ENCODE measurements at regions of chr20 and their contacts with region 1.

Region 1: DNA sequence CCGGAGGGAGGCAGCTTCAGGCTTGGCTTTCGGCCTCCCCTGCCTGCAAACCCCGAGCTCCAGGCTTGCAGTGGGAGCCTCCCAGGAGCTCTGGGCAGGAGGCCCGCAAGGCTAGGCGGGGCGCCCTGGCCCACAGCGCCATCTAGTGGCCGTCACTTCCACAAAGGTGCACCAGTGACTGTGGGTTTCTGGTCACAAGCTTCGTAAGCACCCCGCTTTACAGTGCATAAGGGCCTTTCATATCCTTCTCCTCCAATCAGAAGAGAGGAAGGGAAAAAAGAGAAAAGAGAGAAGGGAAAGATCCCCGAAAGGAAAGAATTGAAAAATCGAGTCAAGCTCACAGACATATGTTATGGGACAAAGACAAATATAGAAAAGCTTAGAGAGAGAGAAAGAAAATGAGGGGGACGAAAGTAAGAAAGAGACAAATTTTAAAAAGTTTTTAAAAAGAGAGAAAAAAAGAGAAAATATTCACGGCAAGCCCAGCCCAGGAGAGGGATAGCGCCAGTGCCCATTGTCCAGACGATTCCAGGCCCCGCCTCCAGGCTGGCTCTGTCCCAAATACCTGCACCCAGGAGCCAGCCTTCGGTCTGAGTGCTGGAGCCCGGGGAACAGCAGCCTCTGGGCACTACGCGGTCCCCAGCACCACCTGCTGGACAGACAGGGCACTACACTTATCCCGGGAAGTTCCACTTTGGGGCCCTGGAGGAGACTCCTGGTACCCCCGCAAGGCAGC is 207.1 kb downstream of the PREX1 start:
- DNase-seq: peak; percentile 72
- ATAC-seq: peak; percentile 91
- H3K4me3 ChIP-seq: peak overlapping the region; percentile 8 to 36; a peak in 3 of 4 replicates
- H3K27ac ChIP-seq: no peak overlapping the region
- H3K4me1 ChIP-seq: peaks cover 5 to 19% of the 10 kb centered on the region in 2 experiments; a peak in 3 of 4 replicates
- H3K27me3 ChIP-seq: no peaks in the 10 kb centered on the region
- CTCF ChIP-seq: peak; percentile 72 to 96 (median 89)
- POLR2A ChIP-seq: no peak
- RAD21 ChIP-seq: peak; percentile 95

Region 2: GRCh38 chr20:47196091-47197081 is 1424.3 kb before region 1 on chr20:
- CTCF ChIA-PET with region 1: interaction called, 3 read pairs
- POLR2A ChIA-PET with region 1: no interaction called
- RAD21 ChIA-PET with region 1: no interaction called
- intact Hi-C with region 1: loop called (anchors 5 kb)
- DNase-seq: peak; percentile 62
- ATAC-seq: peak; percentile 75
- H3K4me3 ChIP-seq: no peak overlapping the region
- H3K27ac ChIP-seq: no peak overlapping the region
- H3K4me1 ChIP-seq: peaks cover 16 to 45% of the 10 kb centered on the region in 2 experiments
- H3K27me3 ChIP-seq: no peaks in the 10 kb centered on the region
- CTCF ChIP-seq: peak; percentile 92 to 98 (median 96)
- POLR2A ChIP-seq: no peak
- RAD21 ChIP-seq: peak; percentile 99

Region 3: DNA sequence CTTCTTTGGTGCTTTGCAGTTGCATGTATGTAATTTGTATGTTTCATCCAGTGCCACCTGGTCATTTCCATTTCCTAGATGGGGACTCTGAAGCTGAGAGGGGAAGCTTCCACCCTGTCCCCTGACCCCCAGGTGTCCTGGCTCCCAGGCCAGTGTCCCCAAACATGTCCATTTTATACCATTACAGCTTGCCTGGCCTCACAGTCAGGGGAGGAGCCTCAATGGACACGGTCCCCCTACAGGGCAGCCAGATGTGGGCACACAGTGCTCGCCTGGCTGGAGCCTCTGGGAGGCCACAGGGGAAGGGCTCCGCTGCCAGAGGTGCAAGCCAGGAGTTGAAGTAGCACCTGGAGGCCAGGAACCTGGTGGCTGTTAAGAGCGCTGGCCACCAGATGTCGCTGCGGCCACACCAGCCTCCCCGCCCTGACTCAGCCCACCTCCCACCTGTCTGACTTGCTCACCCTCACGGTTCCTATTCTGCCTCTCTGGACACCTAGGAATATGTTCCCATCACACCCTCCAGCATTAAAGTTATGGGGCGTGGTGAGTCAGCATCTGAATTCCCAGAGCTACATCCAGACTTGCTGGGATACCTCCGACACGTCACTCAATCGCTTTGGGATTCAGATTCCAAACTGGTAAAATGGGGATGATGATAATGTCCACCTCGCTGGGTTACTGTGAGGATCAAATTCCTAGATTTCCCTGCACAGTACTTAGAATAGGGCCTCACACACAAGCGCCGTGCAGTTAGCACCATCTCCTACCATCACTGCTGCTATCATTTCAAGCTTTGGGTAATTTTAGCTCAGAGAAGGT is 942.8 kb before region 1 on chr20:
- CTCF ChIA-PET with region 1: interaction called, 43 read pairs
- POLR2A ChIA-PET with region 1: interaction called, 3 read pairs
- RAD21 ChIA-PET with region 1: interaction called, 3 to 6 read pairs
- intact Hi-C with region 1: loop called (anchors 1 kb)
- DNase-seq: peak; percentile 51
- ATAC-seq: peak; percentile 92
- H3K4me3 ChIP-seq: no peak overlapping the region
- H3K27ac ChIP-seq: no peak overlapping the region
- H3K4me1 ChIP-seq: peaks cover 0 to 8% of the 10 kb centered on the region in 2 experiments; a peak in 1 of 4 replicates
- H3K27me3 ChIP-seq: no peaks in the 10 kb centered on the region
- CTCF ChIP-seq: peak; percentile 59 to 88 (median 87)
- POLR2A ChIP-seq: no peak
- RAD21 ChIP-seq: peak; percentile 87

Region 4: DNA sequence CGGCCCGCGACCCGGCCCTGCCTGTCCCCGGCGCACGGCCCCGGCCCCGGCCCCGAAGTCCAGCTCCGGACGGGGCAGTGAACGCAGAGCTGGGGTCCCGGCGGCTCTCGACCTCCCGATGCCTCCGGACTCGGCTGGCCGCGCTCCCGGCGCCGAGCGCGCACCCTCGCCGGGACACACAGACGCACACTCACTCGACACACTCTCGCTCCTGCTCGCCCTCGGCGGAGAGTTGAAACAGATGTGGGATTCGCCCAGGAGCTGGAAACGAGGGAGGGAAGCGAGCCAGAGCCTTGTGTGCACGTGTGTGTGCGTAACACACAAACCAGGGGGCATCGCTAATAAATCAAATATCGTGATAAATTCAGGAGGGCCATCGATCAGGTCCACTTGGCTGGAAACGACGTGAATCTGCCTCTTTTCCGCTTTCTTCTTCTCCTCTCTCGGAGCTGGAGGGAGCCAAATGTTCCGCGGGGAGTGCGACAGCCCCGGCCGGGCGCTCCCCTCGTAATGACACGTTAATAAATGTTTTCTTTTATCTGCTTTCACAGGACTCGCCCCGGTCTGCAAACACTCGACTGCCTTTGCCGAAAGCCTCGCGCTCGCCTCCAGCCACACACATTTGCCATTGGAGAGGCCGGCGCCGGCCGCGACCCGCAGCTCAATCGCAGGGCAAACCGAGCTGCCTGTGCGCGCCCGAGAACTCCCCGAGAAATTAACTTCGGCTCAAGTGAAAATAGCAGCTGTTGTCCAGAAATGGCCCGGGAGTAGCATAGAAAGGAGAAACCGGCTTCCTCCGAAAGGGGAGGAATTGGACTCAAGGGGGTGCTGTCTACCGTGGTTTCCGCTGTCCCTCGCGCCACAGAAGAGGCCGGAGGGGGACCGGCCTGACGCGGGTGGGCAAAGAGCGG is 834.6 kb before region 1 on chr20:
- CTCF ChIA-PET with region 1: interaction called, 62 read pairs
- POLR2A ChIA-PET with region 1: interaction called, 4 read pairs
- RAD21 ChIA-PET with region 1: interaction called, 4 to 6 read pairs
- intact Hi-C with region 1: loop called (anchors 1 kb)
- DNase-seq: peak; percentile 64
- ATAC-seq: peak; percentile 83
- H3K4me3 ChIP-seq: peak overlapping the region; percentile 35 to 59
- H3K27ac ChIP-seq: no peak overlapping the region
- H3K4me1 ChIP-seq: peaks cover 11 to 22% of the 10 kb centered on the region in 2 experiments
- H3K27me3 ChIP-seq: no peaks in the 10 kb centered on the region
- CTCF ChIP-seq: peak; percentile 78 to 83 (median 80)
- POLR2A ChIP-seq: no peak
- RAD21 ChIP-seq: peak; percentile 94

Region 5: DNA sequence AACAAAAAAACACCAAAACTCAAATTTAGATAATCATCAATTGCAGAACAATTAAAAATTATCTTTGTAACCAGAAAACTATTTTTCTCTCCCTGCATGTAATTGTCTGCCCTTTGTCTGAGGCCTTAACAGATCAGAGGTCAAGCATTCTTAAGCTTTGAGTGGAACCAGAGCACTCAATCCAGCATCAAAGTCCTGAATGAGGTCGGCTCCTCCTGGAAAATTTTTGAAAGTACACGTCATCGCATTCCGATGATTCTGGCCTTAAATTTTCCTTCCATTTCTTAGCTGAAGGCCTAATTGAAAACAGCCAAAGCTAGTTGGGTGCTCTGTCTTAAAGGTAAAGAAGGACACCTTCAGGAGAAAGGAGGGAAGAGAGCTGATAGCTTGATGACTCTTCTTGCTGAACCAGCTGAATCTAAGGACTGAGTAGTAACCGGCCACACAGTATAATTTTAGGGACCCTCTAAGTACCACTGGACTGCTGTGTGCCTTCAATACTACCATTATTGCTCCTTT is 325.2 kb before region 1 on chr20:
- CTCF ChIA-PET with region 1: interaction called, 18 read pairs
- POLR2A ChIA-PET with region 1: no interaction called
- RAD21 ChIA-PET with region 1: interaction called, 4 to 8 read pairs
- intact Hi-C with region 1: loop called (anchors 2 kb)
- DNase-seq: peak; percentile 79
- ATAC-seq: peak; percentile 92
- H3K4me3 ChIP-seq: no peak overlapping the region
- H3K27ac ChIP-seq: peak overlapping the region; percentile 19; the same call in 1 of the 2 replicates
- H3K4me1 ChIP-seq: peaks cover 20 to 46% of the 10 kb centered on the region in 2 experiments
- H3K27me3 ChIP-seq: 0 out of 2 replicates have a peak, but pooled peaks cover 5% of the 10 kb centered on the region
- CTCF ChIP-seq: peak; percentile 43 to 52 (median 51); a peak in 4 of 6 replicates
- POLR2A ChIP-seq: no peak
- RAD21 ChIP-seq: peak; percentile 85

Region 6: DNA sequence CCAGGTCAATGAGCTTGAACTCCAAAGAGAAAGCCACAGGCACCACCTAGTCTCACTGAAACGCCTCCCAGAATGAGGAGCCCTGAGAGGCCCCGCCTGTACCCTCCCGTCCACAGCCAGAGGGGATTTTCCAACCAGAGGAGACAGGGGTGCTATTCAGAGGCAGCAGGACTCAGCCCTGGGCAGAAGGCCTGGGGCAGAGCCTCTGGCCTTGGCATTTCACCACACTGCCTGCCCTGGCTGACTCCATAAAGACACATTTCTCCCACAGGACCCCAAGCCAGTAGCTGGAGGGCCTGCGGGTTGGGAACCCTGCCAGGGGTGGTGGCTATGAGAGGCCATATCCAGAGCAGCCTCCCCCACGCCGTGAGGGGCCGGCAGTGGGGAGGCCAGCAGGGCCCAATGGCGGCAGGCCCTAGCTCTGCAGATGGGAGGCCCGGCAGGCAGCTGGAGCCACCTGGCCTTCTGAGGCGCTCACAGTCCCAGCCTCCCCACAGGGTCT is 47.8 kb after region 1 on chr20:
- CTCF ChIA-PET with region 1: no interaction called
- POLR2A ChIA-PET with region 1: no interaction called
- RAD21 ChIA-PET with region 1: no interaction called
- intact Hi-C with region 1: no loop called
- DNase-seq: no peak
- ATAC-seq: no peak
- H3K4me3 ChIP-seq: no peak overlapping the region
- H3K27ac ChIP-seq: no peak overlapping the region
- H3K4me1 ChIP-seq: no peaks in the 10 kb centered on the region
- H3K27me3 ChIP-seq: no peaks in the 10 kb centered on the region
- CTCF ChIP-seq: no peak
- POLR2A ChIP-seq: no peak
- RAD21 ChIP-seq: no peak

Region 7: DNA sequence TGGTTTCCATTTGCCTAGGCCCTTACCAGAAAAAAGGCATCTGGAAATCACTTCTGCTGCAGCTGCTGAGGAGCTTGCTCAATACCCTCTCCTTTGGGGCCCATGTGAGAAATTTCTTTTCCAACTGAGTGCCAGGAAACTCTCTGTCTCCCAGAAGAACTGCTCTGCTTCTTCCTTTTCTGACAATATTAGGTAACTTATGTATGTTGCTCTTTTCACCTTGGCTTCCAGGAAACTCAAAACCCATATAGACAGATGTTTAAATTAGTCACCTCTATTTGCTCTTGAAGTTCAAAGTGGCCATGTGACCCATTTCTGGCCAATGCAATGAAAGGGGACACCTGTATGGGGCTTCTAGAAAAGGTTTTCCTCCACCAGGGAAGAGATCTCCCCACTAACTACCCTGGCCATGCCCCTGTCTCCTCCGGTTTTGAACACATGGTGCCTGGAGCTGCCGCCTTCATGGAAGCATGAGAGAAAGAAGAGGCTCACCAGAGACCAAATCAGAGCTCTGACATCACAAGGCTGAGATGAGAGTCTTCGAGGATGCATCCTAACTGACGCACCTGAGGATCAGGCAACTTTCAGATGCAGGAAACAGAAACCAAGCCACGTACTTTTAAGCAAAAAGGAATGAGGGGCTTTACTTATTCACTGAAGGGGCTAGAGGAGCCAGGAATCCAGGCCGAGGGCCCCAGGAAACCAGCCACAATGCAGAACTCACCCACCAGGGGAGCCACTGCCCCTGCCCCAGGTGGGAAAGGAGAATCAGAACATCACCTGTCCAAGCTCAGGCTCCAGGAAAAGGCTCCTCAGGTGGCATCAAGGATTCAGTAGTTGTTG is 85.7 kb after region 1 on chr20:
- CTCF ChIA-PET with region 1: no interaction called
- POLR2A ChIA-PET with region 1: no interaction called
- RAD21 ChIA-PET with region 1: no interaction called
- intact Hi-C with region 1: no loop called
- DNase-seq: no peak
- ATAC-seq: no peak
- H3K4me3 ChIP-seq: no peak overlapping the region
- H3K27ac ChIP-seq: no peak overlapping the region
- H3K4me1 ChIP-seq: no peaks in the 10 kb centered on the region
- H3K27me3 ChIP-seq: no peaks in the 10 kb centered on the region
- CTCF ChIP-seq: peak in 2 of 3 experiments; percentile 26 to 35; a peak in 3 of 6 replicates
- POLR2A ChIP-seq: no peak
- RAD21 ChIP-seq: no peak

Region 8: DNA sequence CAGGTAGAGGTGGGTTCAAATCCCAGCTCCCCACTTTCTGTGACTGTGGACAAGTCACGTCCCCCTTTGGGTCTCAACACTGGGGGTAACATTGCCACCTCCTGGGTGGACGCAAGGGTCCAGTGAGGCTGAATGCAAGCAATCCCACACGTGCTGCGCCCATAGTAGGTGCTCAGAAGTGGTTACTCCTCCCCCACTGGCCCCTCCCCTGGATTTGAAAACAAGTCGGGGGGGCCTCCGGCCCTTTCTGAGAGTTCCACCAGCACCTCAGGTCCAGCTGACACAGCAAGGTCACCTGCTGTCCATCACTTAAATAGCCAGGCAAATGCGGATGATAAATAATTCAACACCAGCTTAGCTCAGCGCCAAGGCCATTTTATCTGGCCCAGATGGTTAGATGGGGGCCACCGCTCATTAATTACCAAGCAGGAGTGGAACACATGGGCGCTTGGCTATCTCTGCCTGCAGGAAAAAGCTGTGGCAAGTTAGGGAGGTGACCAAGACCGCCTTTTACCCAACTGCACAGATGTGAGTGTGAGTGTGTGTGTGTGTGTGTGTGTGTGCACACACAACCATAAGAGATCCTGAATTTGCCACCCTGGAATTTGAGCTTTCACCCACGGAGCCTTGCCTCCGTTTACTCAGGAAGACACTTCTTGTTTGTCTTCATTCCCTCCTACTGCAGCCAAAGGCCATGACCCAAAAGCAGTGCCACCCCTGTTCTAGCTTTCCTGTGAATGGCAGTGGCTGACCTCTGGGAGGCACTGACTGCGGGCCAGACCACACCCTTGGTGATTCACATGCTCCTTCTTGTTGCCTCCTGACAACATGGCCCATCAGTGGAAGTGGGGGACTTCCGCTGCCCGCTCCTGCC is 896.5 kb after region 1 on chr20:
- CTCF ChIA-PET with region 1: no interaction called
- POLR2A ChIA-PET with region 1: no interaction called
- RAD21 ChIA-PET with region 1: no interaction called
- intact Hi-C with region 1: no loop called
- DNase-seq: no peak
- ATAC-seq: peak; percentile 51; the same call in 1 of the 2 replicates
- H3K4me3 ChIP-seq: no peak overlapping the region
- H3K27ac ChIP-seq: no peak overlapping the region
- H3K4me1 ChIP-seq: peaks cover 3 to 12% of the 10 kb centered on the region in 2 experiments; a peak in 3 of 4 replicates
- H3K27me3 ChIP-seq: peaks cover 18% of the 10 kb centered on the region
- CTCF ChIP-seq: no peak
- POLR2A ChIP-seq: no peak
- RAD21 ChIP-seq: no peak